ENCODE measurements at regions of chr20 and their contacts with region 1.

Region 1: DNA sequence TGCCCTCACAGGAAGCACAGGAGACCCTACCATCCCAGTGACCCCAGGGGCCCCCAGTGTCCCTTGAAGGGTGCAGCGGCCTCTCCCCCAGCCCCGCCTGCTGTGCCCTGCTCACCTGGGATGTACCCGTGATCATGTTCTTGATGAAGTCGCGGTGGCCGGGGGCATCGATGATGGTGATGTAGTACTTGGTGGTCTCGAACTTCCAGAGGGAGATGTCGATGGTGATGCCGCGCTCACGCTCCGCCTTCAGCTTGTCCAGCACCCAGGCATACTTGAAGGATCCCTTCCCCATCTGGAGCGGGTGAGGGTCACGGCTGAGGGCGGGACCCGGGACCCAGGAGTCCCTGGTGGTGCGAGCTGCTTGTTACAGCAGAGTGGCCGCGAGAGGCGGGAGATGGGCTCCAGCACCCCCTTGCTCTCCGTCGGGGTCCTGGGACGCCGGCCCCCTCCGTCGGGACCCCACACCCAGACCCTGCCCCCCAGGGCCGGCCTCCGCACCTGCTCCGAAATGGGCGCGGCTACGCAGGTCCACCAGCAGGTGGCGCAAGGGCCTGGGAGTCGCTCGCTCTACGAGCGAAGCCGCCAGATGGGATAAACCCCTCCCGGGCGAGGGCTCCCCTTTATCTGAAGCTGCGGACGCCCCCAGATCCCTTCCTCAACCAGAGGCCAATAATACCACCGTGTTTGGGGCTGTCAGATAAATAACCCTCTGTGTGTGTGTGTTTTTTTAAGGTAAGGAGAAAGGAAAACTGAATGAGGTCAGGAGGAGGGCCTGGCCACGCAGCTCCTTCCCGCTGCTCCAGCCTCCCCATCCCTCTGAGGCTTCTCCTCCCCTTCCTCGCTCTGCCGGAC is 2.9 kb downstream of the EEF1A2 start:
- DNase-seq: peak; percentile 79
- ATAC-seq: peak; percentile 77
- H3K4me3 Mint-ChIP-seq: no peak overlapping the region
- H3K27ac Mint-ChIP-seq: no peak overlapping the region
- H3K4me1 Mint-ChIP-seq: no peaks in the 10 kb centered on the region
- H3K27me3 Mint-ChIP-seq: peaks cover 26% of the 10 kb centered on the region

Region 2: DNA sequence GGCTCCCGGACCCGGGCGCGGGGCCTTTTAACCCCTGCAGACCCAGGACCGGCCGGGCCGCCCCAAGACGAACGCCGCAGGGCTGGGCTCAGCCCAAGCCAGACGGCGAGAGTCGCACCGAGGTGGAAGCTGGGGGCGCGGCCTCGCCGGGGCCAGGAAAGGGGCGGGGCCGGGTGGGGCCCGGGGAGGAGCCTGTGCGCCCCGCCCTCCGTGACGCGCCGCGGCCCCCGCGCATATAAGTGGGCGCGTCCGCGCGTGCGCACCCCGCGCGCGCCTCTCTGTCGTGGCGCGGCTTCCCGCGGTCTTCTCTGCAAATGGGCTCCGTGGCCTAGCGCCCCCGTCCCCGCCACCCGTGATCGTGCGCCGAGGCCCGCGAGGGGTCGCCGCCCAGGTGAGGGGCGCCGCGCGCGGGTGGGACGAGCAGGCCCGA is 24.6 kb after region 1 on chr20 and contains the start of gene PPDPF:
- CTCF ChIA-PET with region 1: interaction called, 11 read pairs
- DNase-seq: peak; percentile 87
- ATAC-seq: peak; percentile 82
- H3K4me3 Mint-ChIP-seq: peak within 1 kb of the TSS; percentile 75
- H3K27ac Mint-ChIP-seq: peak within 1 kb of the TSS; percentile 74
- H3K4me1 Mint-ChIP-seq: peaks cover 10% of the 10 kb centered on the region
- H3K27me3 Mint-ChIP-seq: no peaks in the 10 kb centered on the region
- total RNA-seq, gene PPDPF: 138 to 237 TPM